ENCODE measurements at regions of chr2 and their contacts with region 1.

Region 1: GRCh38 chr2:195533771-195534642 is 123.0 kb upstream of the SLC39A10 start:
- DNase-seq: peak; percentile 50
- H3K4me3 ChIP-seq: no peak overlapping the region
- H3K27me3 ChIP-seq: no peaks in the 10 kb centered on the region
- CTCF ChIP-seq: peak; percentile 33; the same call in 1 of the 2 replicates

Region 2: GRCh38 chr2:195513119-195513518 is 20.9 kb before region 1 on chr2:
- CTCF ChIA-PET with region 1: no interaction called
- POLR2A ChIA-PET with region 1: no interaction called
- DNase-seq: no peak
- H3K4me3 ChIP-seq: no peak overlapping the region
- H3K27me3 ChIP-seq: no peaks in the 10 kb centered on the region
- CTCF ChIP-seq: no peak

Region 3: GRCh38 chr2:195543902-195544894 is 10.2 kb after region 1 on chr2:
- CTCF ChIA-PET with region 1: interaction called, 12 read pairs
- POLR2A ChIA-PET with region 1: no interaction called
- DNase-seq: no peak
- H3K4me3 ChIP-seq: no peak overlapping the region
- H3K27me3 ChIP-seq: no peaks in the 10 kb centered on the region
- CTCF ChIP-seq: no peak

Region 4: GRCh38 chr2:195561203-195562032 is 27.4 kb after region 1 on chr2:
- CTCF ChIA-PET with region 1: no interaction called
- POLR2A ChIA-PET with region 1: interaction called, 12 read pairs
- DNase-seq: peak; percentile 94
- H3K4me3 ChIP-seq: no peak overlapping the region
- H3K27me3 ChIP-seq: no peaks in the 10 kb centered on the region
- CTCF ChIP-seq: no peak

Region 5: DNA sequence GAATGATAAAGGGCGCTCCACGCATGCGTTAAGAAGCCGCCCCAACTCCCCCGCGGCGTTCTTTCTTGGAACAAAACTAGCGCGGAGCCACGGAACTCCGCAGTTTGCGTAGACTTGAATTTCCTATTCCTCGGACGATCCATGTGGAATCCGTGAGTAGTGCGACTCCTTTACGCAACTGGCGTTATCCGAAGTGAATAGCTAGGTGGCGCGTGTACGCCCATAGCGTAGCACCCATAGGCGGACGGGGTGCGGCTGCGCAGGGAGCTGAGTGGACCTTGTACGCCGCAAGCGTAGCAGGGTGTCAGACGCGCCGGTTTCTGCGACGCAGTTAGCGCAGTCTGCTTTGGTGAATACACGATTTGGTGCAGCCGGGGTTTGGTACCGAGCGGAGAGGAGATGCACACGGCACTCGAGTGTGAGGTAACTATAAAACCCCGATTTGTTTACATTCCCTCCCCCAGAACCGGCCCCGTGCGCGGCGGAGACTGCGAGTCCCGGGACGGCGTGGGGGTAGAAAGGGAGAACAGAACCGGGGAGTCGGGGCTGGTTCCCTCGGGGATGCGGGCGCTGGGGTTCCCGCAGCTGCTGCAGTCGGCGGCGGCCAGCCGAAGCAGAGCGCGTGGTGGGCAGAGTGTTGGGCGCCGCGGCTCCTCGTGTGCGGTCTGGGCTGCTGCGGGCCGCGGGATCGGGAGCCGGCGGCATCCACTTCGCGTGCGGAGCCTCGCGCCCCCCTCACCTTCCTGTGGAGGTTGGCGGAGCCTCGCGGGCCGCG is 123.0 kb after region 1 on chr2 and contains the start of gene SLC39A10:
- CTCF ChIA-PET with region 1: interaction called, 12 read pairs
- POLR2A ChIA-PET with region 1: interaction called, 13 read pairs
- DNase-seq: peak; percentile 92
- H3K4me3 ChIP-seq: peak within 1 kb of the TSS; percentile 79
- H3K27me3 ChIP-seq: no peaks in the 10 kb centered on the region
- CTCF ChIP-seq: no peak
- polyA plus RNA-seq, gene SLC39A10: 13.7 and 25.7 TPM in 2 replicates

Region 6: DNA sequence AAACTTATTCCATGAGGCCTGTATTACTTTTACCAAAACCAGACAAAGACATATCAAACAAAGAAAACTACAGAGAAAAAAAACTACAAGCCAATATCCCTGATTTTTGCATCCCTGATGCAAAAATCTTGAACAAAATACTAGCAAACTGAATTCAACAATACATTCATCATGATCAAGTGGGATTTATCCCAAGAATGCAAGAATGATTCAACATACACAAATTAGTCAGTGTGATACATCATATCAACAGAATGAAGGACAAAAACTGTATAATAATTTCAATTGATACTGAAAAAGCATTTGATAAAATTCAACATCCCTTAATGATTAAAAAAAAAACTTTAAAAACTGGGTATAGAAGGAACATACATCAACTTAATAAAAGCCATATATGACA is 229.9 kb after region 1 on chr2:
- CTCF ChIA-PET with region 1: no interaction called
- POLR2A ChIA-PET with region 1: no interaction called
- DNase-seq: no peak
- H3K4me3 ChIP-seq: no peak overlapping the region
- H3K27me3 ChIP-seq: no peaks in the 10 kb centered on the region
- CTCF ChIP-seq: no peak